HepG2 (cell line): ENCODE measurements at regions of chr15 and their contacts with region 1.

Region 1: DNA sequence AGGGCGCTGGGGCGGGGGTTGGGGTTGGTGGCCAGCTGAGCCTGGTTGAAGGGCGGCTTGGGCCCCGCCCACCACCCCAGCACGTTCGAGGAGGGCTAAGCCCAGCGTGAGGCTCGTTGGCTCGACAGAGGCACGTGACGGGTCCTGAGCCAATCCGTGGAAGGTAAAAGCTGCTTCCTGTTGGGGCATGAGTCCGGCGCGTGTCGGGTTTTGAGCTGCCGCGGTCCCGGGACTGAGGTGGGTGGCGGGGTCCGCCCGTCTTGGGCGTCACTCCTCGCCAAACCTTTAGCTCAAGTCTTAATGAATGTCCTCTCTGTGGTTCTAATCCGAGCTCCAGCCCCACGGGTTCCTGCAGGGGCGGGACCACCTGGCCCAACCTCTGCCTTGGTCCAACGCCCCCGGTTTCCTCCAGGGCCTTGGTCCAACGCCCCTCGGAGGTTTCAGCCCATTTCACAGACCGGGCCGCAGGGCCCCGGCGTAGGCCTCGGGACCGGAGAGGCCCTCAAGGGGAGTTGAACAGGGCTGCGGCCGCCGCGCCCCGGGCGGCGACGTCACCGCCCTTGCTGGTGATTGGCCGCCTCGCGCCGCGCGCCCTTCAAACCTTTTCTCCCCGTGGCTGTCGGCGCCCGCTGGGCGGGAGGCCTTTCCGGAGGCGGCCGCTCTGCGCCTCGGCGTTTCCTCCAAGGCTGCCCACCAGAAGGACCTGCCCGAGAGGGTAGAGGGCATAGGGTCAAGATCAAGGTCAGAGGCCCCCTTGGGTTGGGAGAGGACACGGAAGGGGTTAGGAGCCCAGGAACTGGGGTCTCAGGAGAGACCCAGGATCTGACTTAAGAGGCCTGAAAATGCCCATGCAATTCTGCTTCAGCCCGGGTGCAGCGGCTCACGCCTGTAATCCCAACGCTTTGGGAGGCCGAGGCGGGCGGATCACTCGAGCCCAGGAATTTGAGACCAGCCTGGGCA is at the start of gene RCCD1:
- DNase-seq: peak; percentile 94
- ATAC-seq: peak; percentile 95
- H3K4me3 ChIP-seq: peak within 1 kb of the TSS; percentile 60 to 77 (median 65)
- H3K27ac ChIP-seq: peak within 1 kb of the TSS; percentile 97
- H3K4me1 ChIP-seq: peaks cover 11% of the 10 kb centered on the region
- H3K27me3 ChIP-seq: no peaks in the 10 kb centered on the region
- CTCF ChIP-seq: no peak
- EP300 ChIP-seq: peak in 1 of 2 experiments; percentile 20; a peak in 1 of 4 replicates
- POLR2A ChIP-seq: peak; percentile 77 to 82
- RAD21 ChIP-seq: 0 out of 2 replicates have a peak, but pooled peaks have one; percentile 9
- total RNA-seq, gene RCCD1: 10.0 and 15.1 TPM in 2 replicates

Region 2: GRCh38 chr15:90883976-90884718 is 70.8 kb before region 1 on chr15 and contains the start of gene FES:
- CTCF ChIA-PET with region 1: no interaction called
- POLR2A ChIA-PET with region 1: no interaction called
- in situ Hi-C with region 1: no loop called
- intact Hi-C with region 1: no loop called
- DNase-seq: no peak
- ATAC-seq: peak; percentile 37
- H3K4me3 ChIP-seq: peak within 1 kb of the TSS; percentile 37 to 65 (median 54); a peak in 5 of 6 replicates
- H3K27ac ChIP-seq: no peak within 1 kb of the TSS
- H3K4me1 ChIP-seq: peaks cover 36% of the 10 kb centered on the region
- H3K27me3 ChIP-seq: 0 out of 5 replicates have a peak, but pooled peaks cover 0 to 3% of the 10 kb centered on the region in 2 experiments
- CTCF ChIP-seq: no peak
- EP300 ChIP-seq: no peak
- POLR2A ChIP-seq: no peak
- RAD21 ChIP-seq: no peak
- total RNA-seq, gene FES: 8.5 and 9.5 TPM in 2 replicates

Region 3: GRCh38 chr15:91032919-91033803 is 78.2 kb after region 1 on chr15:
- CTCF ChIA-PET with region 1: no interaction called
- POLR2A ChIA-PET with region 1: interaction called, 3 read pairs
- in situ Hi-C with region 1: no loop called
- intact Hi-C with region 1: loop called (anchors 5 kb)
- DNase-seq: peak; percentile 75
- ATAC-seq: peak; percentile 96
- H3K4me3 ChIP-seq: peak overlapping the region in 1 of 3 experiments; percentile 64; a peak in 2 of 6 replicates
- H3K27ac ChIP-seq: no peak overlapping the region
- H3K4me1 ChIP-seq: no peaks in the 10 kb centered on the region
- H3K27me3 ChIP-seq: peaks cover 2 to 21% of the 10 kb centered on the region in 2 experiments; a peak in 3 of 5 replicates
- CTCF ChIP-seq: peak; percentile 98
- EP300 ChIP-seq: no peak
- POLR2A ChIP-seq: no peak
- RAD21 ChIP-seq: peak; percentile 82